ENCODE measurements at regions of chr3 and their contacts with region 1.

Region 1: DNA sequence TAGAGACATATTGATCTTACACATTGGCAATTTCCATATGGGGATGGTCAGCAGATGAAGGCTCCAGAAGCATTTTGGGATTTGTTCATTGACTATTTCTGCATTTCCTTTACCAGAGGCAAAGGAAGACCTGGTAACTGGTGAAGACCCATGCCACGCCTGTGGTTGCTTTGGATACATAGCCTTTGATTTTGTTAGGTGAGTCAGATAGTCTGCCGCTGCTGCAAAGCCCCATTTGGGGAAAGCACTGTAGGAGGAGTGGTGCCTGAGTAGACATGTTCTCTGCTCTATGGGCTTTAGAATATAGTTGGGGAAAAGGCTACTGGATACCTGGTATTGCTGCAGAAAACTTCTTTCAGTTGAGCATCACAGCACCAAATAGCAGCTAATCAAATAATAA is 56.8 kb downstream of the TFG start:
- DNase-seq: peak; percentile 24
- H3K4me3 Mint-ChIP-seq: no peak overlapping the region
- H3K27ac Mint-ChIP-seq: no peak overlapping the region
- H3K4me1 Mint-ChIP-seq: peaks cover 10% of the 10 kb centered on the region
- H3K27me3 Mint-ChIP-seq: no peaks in the 10 kb centered on the region

Region 2: DNA sequence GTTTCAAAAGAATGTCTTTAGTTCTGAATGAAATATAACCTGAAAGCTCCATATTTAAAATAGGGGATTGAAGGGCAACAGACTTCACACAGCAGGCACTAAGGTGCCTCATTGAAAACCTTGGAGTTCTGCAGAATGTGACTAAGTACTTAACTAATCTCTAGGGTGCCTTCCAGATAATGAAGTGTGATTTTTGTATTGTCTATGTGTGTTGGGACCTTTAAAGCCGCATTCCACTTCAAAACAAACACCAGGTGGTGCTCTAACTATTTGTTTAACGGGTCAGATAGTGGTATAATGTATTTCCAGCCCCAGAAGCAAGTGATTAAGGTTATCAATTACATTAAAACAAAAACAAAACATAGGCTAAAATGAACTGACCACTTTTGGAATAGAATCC is 28.7 kb before region 1 on chr3:
- CTCF ChIA-PET with region 1: no interaction called
- POLR2A ChIA-PET with region 1: interaction called, 12 read pairs
- DNase-seq: no peak
- H3K4me3 Mint-ChIP-seq: no peak overlapping the region
- H3K27ac Mint-ChIP-seq: no peak overlapping the region
- H3K4me1 Mint-ChIP-seq: peaks cover 3% of the 10 kb centered on the region
- H3K27me3 Mint-ChIP-seq: no peaks in the 10 kb centered on the region

Measured in activated CD4-positive, alpha-beta T cell treated with anti-CD3 and anti-CD28 coated beads, Interleukin-2, amount 10 ng/mL, durations not matched to agents 7 days and 5 days (primary cell).